OCI-LY7 (cell line): ENCODE measurements at regions of chr14 and their contacts with region 1.

Region 1: GRCh38 chr14:63795532-63795931 is 57.3 kb upstream of the SYNE2 start:
- DNase-seq: no peak
- H3K4me3 ChIP-seq: no peak overlapping the region
- H3K27ac ChIP-seq: no peak overlapping the region
- H3K4me1 ChIP-seq: peaks cover 8% of the 10 kb centered on the region
- CTCF ChIP-seq: no peak

Region 2: DNA sequence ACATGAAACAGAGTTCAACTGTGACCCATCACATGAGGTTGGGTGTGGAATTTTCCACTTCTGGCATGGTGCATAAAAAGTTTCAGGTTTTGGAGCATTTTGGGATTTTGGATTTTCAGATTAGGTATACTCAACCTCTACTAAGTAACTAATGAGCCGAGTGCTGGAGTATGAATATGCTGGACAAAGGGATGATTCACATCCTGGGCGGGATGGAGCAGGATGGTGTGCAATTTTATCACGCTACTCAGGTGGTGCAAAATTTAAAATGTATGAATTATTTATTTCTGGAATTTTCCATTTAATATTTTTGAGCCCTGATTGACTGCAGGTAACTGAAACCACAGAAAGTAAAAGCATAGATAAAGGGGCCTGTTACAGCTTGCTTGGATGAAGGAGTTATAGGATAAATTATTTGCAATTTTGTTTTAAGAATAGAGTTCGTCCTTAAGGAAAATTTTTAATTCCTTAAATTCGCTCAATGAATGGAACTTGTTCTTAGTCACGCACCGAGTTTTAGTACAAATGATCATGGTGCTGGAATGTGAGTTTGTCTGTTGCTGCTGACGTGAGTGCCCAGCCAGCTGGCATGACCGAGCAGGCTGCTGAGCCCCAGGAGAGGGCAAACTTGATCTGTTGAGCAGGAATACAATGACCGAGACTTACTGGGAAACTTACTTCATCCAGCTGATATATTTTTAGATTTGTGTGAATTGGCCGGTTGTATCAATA is 322.3 kb after region 1 on chr14:
- CTCF ChIA-PET with region 1: no interaction called
- POLR2A ChIA-PET with region 1: no interaction called
- intact Hi-C with region 1: loop called (anchors 10 kb)
- DNase-seq: no peak
- H3K4me3 ChIP-seq: no peak overlapping the region
- H3K27ac ChIP-seq: no peak overlapping the region
- H3K4me1 ChIP-seq: no peaks in the 10 kb centered on the region
- CTCF ChIP-seq: no peak